ENCODE measurements at regions of chr10 and their contacts with region 1.

Region 1: DNA sequence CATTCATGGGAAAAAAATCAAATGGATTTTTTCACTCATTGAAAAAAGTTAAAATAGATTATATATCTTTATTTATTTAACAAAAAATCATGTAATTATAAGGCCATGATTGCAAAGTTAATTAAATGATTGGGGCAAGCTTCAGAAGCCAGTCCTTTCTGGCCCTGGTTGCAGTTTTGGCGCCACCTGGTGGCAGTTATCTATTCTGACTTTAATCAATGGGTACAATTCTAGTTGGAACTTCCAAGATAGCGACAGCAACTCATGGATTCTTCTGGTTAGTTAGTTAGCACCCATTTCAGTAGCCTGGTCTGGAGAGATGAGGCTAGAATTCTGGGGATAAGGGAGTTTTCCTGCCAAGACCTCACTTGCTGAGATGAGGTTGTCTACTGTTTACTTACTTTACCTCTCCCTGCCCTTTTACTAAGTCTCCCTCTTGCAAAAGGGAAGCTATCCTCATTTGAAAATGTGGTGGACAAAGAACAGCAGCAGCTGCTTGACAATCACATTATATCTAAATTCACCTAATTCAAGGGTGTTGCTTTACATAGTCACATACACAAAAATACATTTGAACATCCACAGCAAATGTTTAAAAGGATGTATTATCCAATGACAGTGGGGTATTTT is 42.3 kb downstream of the NOC3L start:
- DNase-seq: peak; percentile 69
- H3K4me3 ChIP-seq: no peak overlapping the region
- H3K27ac ChIP-seq: no peak overlapping the region
- H3K4me1 ChIP-seq: peaks cover 13% of the 10 kb centered on the region
- H3K27me3 ChIP-seq: no peaks in the 10 kb centered on the region

Region 2: DNA sequence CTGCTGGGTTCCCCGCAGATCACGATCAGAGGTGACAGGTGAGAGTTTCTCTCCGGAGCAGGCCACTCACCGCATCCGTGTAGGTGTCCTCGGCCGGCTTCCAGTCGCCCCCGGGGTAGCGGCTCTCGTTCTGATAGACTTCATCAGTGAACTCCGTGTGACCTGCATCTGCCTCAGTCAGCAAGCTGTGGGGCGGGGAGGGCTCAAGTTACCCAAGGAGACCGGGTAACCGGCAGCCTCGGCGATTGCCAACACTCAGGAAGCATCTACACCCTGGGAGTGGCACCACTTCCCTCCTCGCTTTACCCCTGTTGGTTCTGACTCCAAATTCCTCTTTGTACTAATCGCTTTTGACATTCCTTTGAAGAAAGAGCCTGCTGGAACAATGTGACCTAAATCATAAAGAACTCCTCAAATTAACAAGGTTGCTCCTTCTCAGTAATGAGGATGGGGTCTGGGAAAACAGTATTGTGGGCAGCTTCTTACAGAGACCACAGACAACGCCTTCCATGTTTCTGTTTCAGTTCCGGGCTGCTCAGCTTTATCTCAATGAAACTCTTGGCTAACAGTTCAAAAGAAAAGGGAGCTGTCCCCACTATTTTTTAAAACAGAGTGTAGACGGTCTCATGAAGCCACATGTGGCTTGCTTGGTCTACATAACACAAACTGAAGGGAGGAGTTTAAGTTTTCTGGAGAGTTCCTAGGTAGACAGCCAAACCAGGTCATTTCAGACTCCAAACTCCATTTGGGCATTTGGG is 956.3 kb before region 1 on chr10:
- in situ Hi-C with region 1: no loop called
- DNase-seq: no peak
- H3K4me3 ChIP-seq: no peak overlapping the region
- H3K27ac ChIP-seq: no peak overlapping the region
- H3K4me1 ChIP-seq: no peaks in the 10 kb centered on the region
- H3K27me3 ChIP-seq: no peaks in the 10 kb centered on the region

Region 3: DNA sequence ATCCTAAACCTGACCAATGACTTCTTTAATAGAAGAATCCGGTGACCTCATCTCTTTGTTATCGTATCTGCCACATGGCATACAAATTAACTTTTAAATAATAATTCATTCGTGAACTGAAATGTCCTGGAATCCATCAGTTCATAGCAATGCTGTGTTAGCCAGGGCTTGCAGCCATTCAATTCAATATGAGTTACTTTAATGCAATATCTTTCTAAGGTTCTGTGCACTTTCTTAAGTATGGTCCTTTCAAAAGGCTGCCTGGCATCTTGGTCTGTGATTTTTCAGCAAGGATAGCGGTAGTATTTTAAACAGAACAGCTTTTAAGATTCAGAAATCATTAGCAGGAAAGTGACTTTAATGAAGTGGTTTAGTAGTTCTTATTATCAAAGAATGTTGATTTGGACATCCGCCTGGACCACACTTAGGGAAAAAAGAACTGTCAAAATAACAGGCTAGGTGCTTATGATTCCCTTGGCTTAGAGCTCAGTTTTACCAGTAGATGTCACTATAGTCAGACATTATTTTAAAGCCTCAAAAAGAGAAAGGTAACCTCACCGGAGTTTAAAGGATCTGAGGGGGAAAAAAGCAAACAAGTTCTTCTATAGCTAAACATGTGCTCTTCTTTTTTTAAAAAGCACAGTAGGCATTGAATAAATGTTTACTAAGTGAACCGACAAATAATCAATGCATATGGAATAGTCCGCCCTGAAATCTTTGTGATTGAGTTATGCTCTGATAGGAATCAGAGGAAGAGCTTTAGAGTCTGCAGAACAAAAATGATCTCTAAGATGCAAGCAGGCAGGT is 403.9 kb before region 1 on chr10:
- in situ Hi-C with region 1: loop called (anchors 10 kb)
- DNase-seq: peak; percentile 59
- H3K4me3 ChIP-seq: no peak overlapping the region
- H3K27ac ChIP-seq: no peak overlapping the region
- H3K4me1 ChIP-seq: no peaks in the 10 kb centered on the region
- H3K27me3 ChIP-seq: no peaks in the 10 kb centered on the region

Region 4: GRCh38 chr10:94481410-94481809 is 161.0 kb after region 1 on chr10:
- in situ Hi-C with region 1: no loop called
- DNase-seq: no peak
- H3K4me3 ChIP-seq: no peak overlapping the region
- H3K27ac ChIP-seq: no peak overlapping the region
- H3K4me1 ChIP-seq: no peaks in the 10 kb centered on the region
- H3K27me3 ChIP-seq: no peaks in the 10 kb centered on the region

Region 5: GRCh38 chr10:94496010-94496409 is 175.6 kb after region 1 on chr10:
- in situ Hi-C with region 1: no loop called
- DNase-seq: peak; percentile 6
- H3K4me3 ChIP-seq: no peak overlapping the region
- H3K27ac ChIP-seq: no peak overlapping the region
- H3K4me1 ChIP-seq: peaks cover 12% of the 10 kb centered on the region; the same call in 1 of the 2 replicates
- H3K27me3 ChIP-seq: no peaks in the 10 kb centered on the region

Region 6: DNA sequence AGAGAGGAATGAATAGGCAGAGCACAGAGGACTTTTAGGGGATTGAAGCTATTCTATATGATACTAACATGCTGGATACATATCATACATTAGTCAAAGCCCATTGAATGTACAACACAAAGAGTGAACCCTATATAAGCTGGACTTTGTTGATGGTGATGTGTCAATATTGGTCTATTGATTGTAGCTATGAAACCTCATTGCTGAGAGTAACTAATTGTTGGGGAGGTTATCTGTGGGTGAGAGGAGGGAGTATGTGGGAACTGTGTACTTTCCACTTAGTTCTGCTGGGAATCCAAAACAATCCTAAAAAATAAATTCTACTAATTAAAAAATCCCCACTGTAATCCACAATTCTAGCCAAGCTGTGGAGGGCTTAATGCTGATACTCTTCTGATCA is 596.0 kb after region 1 on chr10:
- in situ Hi-C with region 1: no loop called
- DNase-seq: no peak
- H3K4me3 ChIP-seq: no peak overlapping the region
- H3K27ac ChIP-seq: no peak overlapping the region
- H3K4me1 ChIP-seq: no peaks in the 10 kb centered on the region
- H3K27me3 ChIP-seq: no peaks in the 10 kb centered on the region; the same call in 1 of the 2 replicates

Measured in GM23248 (cell line).